ENCODE measurements at regions of chr10 and their contacts with region 1.

Region 1: DNA sequence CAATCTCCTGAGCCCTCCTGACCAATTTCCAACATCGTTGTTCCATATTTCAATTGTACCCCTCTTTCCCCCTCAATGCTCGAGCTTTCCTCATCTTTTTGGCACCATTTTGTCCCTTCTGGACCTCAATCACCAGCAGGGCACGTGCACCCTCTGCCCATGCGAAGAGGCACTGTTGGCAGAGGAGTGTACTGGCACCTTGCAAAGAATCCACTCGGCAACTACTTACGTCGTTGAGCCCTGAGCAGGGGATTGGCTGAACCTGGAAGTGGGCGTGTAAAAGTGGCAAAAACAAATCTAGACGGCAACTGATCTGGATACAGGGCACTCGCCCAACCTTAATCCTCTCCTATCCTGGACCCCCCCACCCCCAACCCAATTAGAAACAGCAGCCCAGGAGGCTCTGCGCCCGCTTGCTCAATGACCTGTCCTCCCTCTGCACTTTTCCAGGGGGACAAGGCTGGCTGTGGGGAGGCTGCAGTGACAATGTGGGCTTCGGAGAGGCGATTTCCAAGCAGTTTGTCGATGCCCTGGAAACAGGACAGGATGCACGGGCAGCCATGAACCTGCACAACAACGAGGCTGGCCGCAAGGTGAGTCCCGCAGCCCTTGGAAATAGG is 18.8 kb downstream of the WNT8B start:
- DNase-seq: peak; percentile 97
- H3K4me3 Mint-ChIP-seq: peak overlapping the region; percentile 74
- H3K27ac Mint-ChIP-seq: peak overlapping the region; percentile 6
- H3K4me1 Mint-ChIP-seq: peaks cover 12% of the 10 kb centered on the region
- H3K27me3 Mint-ChIP-seq: peaks cover 14% of the 10 kb centered on the region

Region 2: GRCh38 chr10:100346765-100347567 is 134.6 kb before region 1 on chr10 and contains the start of gene SCD:
- CTCF ChIA-PET with region 1: interaction called, 11 read pairs
- POLR2A ChIA-PET with region 1: no interaction called
- intact Hi-C with region 1: no loop called
- DNase-seq: peak; percentile 93
- H3K4me3 Mint-ChIP-seq: peak within 1 kb of the TSS; percentile 87
- H3K27ac Mint-ChIP-seq: peak within 1 kb of the TSS; percentile 81
- H3K4me1 Mint-ChIP-seq: peaks cover 39% of the 10 kb centered on the region
- H3K27me3 Mint-ChIP-seq: peaks cover 2% of the 10 kb centered on the region
- total RNA-seq, gene SCD: 156 to 158 TPM

Region 3: DNA sequence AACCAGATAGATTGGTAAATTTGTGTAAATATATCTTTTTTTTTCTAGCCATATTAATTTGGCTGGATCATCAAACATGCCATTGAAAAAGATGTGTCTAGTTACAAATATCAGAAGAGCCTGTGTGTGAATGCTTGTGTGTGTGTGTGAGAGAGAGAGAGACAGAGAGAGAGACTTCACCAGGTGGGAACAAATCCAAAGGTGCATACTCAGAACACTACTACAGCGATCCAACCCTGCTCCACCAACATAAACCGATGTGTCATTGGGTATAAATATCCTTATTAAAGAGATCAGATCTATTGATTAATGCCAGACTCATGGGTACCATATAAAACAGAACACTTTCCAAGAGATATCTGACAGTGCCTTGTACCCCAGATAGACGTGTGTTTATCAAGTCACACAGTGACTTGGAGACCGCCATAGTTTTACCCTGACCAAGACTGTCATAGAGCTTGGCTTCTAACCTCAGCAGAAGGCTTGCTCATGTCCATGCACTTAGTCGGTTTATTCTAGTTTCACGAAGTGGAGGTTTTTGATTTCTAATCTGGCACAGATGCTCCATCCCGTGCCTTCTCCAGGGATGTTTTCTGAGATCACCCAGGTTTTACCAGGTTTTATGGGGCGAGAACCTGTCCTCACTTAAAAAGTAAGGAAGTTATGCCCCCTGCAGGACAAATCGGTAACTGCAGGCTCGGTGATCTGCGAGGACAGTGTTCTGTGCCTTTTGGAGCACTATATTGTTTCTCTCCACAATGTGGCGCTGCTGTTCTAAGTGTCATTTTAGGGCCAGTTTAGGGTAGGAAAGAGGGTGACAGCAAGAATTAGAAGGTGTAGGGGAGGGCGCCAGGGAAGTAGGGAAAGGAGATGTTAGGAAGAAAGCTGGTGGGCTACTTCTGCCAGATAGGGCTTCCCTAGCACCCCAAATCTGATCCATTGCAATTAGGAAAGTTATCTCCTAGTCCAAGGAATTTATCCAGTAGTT is 48.0 kb before region 1 on chr10:
- CTCF ChIA-PET with region 1: interaction called, 5 read pairs
- POLR2A ChIA-PET with region 1: no interaction called
- intact Hi-C with region 1: loop called (anchors 1 kb)
- DNase-seq: peak; percentile 97
- H3K4me3 Mint-ChIP-seq: no peak overlapping the region
- H3K27ac Mint-ChIP-seq: peak overlapping the region; percentile 2
- H3K4me1 Mint-ChIP-seq: peaks cover 2% of the 10 kb centered on the region
- H3K27me3 Mint-ChIP-seq: no peaks in the 10 kb centered on the region

Region 4: DNA sequence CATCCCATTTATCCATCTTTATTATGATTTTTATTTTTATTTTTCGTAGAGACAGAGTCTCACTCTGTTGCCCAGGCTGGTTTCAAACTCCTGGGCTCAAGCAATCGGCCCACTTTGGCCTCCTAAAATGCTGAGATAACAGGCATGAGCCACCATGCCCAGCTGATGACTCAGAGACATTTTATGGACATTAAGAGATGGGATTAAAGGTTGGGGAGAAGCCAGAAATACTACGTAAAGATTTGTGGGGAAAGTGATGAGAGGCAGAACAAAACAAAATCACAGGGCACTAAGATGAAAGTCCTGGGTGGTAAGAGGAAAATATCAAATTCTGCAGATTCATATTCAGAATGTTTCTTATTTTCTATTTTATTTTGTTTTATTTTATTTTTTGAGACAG is 11.2 kb before region 1 on chr10:
- CTCF ChIA-PET with region 1: interaction called, 13 read pairs
- POLR2A ChIA-PET with region 1: no interaction called
- intact Hi-C with region 1: no loop called
- DNase-seq: no peak
- H3K4me3 Mint-ChIP-seq: no peak overlapping the region
- H3K27ac Mint-ChIP-seq: no peak overlapping the region
- H3K4me1 Mint-ChIP-seq: no peaks in the 10 kb centered on the region
- H3K27me3 Mint-ChIP-seq: peaks cover 3% of the 10 kb centered on the region

Region 5: GRCh38 chr10:100496567-100496966 is 15.0 kb after region 1 on chr10:
- CTCF ChIA-PET with region 1: interaction called, 57 read pairs
- POLR2A ChIA-PET with region 1: no interaction called
- intact Hi-C with region 1: no loop called
- DNase-seq: no peak
- H3K4me3 Mint-ChIP-seq: no peak overlapping the region
- H3K27ac Mint-ChIP-seq: no peak overlapping the region
- H3K4me1 Mint-ChIP-seq: peaks cover 2% of the 10 kb centered on the region
- H3K27me3 Mint-ChIP-seq: no peaks in the 10 kb centered on the region

Region 6: DNA sequence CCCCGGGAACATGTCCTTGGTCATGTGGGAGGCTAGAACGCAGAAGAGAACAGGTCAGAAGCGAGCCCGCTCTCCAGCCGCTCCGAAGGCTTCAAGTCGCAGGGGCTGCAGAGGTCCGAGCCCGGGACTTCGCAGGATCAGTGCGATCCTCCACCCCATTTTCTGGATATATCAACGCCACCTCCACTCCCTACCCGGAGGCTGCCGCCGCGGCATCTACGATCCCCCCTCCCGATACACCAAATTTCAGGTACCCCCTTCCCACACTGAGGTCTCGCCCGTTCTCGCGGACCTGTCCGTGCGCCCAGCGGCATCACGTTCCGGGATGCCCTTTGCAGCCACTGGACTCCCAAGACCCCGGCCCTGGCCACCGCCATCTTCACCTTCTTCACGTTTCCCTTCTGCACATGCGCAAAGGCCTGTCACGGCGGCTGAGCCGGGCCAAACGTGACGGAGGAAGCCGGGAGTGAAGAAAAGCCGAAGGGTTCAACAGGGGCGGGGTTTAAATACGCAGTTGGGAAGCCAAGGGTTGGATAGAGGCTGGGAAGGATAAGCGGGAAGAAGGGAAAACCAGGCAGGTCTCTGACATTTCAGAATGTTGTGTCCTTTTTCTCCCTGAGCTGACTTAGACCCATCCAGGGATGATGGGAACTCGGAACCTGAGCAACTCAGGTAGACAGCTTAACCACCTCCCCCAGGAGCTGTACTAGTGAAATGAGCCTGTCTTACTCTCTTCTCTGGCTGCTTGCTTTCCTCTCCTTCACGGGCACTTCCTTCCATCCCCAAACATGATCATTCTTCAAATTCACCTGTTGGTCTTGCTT is 48.1 kb after region 1 on chr10 and contains the start of gene NDUFB8:
- CTCF ChIA-PET with region 1: interaction called, 10 read pairs
- POLR2A ChIA-PET with region 1: no interaction called
- intact Hi-C with region 1: no loop called
- DNase-seq: peak; percentile 92
- H3K4me3 Mint-ChIP-seq: peak within 1 kb of the TSS; percentile 100
- H3K27ac Mint-ChIP-seq: peak within 1 kb of the TSS; percentile 96
- H3K4me1 Mint-ChIP-seq: peaks cover 33% of the 10 kb centered on the region
- H3K27me3 Mint-ChIP-seq: no peaks in the 10 kb centered on the region
- total RNA-seq, gene NDUFB8: 390 to 404 TPM